Posterior cingulate gyrus (tissue), 11 donors: ENCODE measurements at regions of chr10 and their contacts with region 1.

Region 1: GRCh38 chr10:7410862-7411670 is at the start of gene SFMBT2:
- DNase-seq: peak in 8 of 10 donors; percentile 49 to 95 (median 61)

Region 2: DNA sequence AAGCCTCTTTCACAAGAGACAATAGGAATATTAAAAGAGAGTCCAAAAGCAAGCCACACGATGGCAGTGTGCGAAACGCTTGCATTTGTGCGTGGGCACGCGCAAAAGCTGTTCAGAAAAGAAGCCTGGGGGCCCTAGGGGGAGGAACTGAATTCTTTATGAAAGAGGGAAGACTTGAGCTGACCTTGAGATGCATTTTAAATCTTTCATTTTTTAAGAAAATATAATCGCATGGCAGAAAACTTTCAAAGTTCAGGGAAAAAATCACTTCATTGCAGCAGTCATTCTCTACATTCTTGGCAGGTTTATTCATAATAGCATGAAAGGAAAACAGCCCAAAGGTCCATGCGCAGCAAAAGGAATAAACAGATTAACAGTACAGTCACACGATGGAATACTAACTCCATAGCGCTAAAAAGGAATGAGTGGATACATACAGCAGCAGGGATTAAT is 624.5 kb before region 1 on chr10:
- intact Hi-C with region 1: loop called (anchors 5 kb)
- DNase-seq: peak in 8 of 10 donors; percentile 36 to 91 (median 59)

Region 3: DNA sequence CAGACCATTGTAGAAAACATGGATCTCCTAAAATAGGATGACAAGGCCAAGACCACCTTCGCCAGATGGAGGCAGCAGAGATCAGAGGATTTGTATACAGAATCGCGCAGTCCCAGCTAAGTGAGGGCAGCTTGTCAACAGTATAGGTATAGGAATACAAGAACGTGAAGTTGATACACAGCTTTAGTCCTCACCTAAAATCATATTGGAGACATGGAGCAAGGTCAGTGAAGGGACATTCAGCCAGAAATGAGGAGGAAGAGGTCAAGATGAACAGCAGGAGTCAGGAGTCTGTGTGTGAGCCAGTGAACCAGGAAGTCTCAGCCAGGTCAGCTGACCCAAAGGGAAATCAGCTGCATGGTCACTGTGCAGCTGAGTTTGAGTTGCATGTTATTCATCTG is 567.6 kb before region 1 on chr10:
- intact Hi-C with region 1: loop called (anchors 2 kb)
- DNase-seq: peak in 4 of 10 donors; percentile 39 to 88 (median 66)

Region 4: DNA sequence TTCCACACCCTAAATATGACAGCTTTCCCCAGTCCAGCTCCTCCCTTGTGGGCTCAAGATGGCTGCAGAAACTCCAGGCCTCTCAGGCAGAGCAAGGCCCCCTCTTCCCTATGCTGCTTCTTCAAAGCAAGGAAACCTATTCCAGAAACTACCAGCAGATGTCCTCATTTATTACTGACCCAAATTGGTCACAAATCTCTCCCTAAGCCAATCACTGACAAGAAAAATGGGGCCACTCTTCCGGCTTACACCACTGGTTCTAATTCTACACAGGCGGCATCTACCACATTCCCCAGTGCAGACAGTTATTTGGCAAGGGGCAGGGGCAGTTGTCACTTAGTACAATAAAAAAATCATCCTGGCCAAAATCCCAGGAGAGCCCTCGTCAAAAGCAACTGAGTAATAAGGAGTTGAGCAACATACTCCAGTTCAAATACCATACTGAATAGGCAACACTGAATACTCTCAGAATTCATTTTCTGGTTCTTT is 150.6 kb before region 1 on chr10:
- intact Hi-C with region 1: loop called (anchors 2 kb)
- DNase-seq: peak in 2 of 10 donors; percentile 24 to 25

Region 5: DNA sequence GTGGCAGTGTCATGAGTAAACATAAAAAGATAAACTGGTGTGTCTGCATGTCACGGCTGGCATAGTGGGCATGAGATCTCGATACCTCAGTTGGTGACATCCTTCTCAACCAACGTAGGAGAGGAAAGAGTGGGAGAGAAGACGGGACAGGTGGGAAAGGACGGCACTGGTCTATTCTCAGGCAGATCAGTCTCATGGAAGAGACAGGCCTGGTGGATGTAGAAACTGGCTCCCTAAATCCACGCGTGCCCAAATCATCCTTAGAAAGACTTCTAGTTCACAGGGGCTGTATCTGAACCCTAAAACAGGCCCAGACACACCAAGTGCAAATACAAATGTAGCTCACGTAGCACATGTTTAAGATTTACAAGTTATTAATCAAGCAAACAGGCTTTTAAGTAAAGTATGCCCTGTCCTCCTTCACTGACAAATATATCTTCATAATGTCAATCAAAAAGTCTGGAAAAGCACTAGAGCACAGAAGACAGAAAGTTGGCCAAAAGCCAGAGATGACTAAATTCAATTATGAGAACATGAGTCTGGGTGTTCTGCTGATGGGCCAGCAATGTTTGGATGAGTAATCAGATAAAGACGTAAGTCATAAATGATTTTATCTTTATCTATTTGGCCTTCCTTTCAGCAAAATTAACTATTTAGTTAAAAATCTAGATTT is 56.6 kb before region 1 on chr10:
- intact Hi-C with region 1: no loop called
- DNase-seq: no peak